Heart left ventricle (tissue), 16 donors: ENCODE measurements at regions of chr9 and their contacts with region 1.

Region 1: GRCh38 chr9:132669698-132670456 is at the start of gene DDX31:
- DNase-seq: peak; percentile 88 to 93 (median 90)
- ATAC-seq: peak; percentile 97 to 99 (median 98)
- H3K4me3 ChIP-seq: peak within 1 kb of the TSS; percentile 61 to 98 (median 88)
- H3K27ac ChIP-seq: peak within 1 kb of the TSS; percentile 80 to 100 (median 97)
- H3K4me1 ChIP-seq: peaks cover 0 to 44% (median 27%) of the 10 kb centered on the region in 12 donors
- H3K27me3 ChIP-seq: no peaks in the 10 kb centered on the region
- CTCF ChIP-seq: no peak
- POLR2A ChIP-seq: peak in 1 of 2 donors; percentile 34
- total RNA-seq, gene DDX31: 4.4 to 7.0 (median 5.1) TPM

Region 2: DNA sequence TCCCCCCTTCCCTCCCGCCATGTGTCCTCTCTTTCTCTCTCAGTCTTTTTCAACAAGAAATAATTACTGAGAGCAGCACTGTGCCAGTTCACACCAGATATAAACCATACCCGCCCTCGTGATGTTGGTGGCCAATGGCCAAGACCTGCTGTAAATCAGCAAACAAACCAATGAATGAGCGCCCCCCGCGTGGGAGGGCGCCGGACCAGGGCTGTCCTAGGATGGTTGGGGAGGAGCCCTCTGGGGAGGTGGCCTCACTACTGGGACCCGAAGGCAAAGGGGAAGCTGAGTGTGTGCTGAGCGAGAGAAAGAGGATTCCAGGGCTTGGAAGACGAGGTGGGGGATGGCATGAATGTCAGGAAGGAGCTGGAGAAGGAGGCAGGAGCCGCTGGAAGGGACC is 138.7 kb before region 1 on chr9:
- intact Hi-C with region 1: no loop called
- DNase-seq: no peak
- ATAC-seq: peak in 1 of 4 donors; percentile 18
- H3K4me3 ChIP-seq: no peak overlapping the region
- H3K27ac ChIP-seq: peak overlapping the region in 1 of 12 donors; percentile 43
- H3K4me1 ChIP-seq: no peaks in the 10 kb centered on the region
- H3K27me3 ChIP-seq: no peaks in the 10 kb centered on the region
- CTCF ChIP-seq: no peak
- POLR2A ChIP-seq: no peak

Region 3: GRCh38 chr9:132656299-132656698 is 13.6 kb before region 1 on chr9:
- intact Hi-C with region 1: no loop called
- DNase-seq: no peak
- ATAC-seq: no peak
- H3K4me3 ChIP-seq: no peak overlapping the region
- H3K27ac ChIP-seq: no peak overlapping the region
- H3K4me1 ChIP-seq: no peaks in the 10 kb centered on the region
- H3K27me3 ChIP-seq: no peaks in the 10 kb centered on the region
- CTCF ChIP-seq: no peak
- POLR2A ChIP-seq: no peak

Region 4: DNA sequence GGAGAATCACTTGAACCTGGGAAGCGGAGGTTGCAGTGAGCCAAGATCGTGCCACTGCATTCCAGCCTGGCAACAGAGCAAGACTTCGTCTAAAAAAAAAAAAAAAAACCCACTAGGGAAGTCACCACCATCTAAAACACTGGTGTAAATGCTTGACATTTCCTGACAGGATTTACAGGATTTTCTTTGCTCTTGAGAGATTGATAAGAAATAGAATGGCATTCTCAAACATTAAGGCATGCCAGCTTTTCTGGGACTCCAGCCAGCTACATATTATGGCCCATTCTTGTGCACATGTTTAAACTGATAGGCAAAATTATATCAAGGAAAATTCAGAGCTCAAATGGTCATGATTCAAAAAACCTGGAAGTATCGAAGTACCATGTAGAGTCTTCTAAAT is 29.1 kb after region 1 on chr9:
- intact Hi-C with region 1: no loop called
- DNase-seq: no peak
- ATAC-seq: no peak
- H3K4me3 ChIP-seq: no peak overlapping the region
- H3K27ac ChIP-seq: no peak overlapping the region
- H3K4me1 ChIP-seq: no peaks in the 10 kb centered on the region
- H3K27me3 ChIP-seq: no peaks in the 10 kb centered on the region
- CTCF ChIP-seq: no peak
- POLR2A ChIP-seq: no peak

Region 5: DNA sequence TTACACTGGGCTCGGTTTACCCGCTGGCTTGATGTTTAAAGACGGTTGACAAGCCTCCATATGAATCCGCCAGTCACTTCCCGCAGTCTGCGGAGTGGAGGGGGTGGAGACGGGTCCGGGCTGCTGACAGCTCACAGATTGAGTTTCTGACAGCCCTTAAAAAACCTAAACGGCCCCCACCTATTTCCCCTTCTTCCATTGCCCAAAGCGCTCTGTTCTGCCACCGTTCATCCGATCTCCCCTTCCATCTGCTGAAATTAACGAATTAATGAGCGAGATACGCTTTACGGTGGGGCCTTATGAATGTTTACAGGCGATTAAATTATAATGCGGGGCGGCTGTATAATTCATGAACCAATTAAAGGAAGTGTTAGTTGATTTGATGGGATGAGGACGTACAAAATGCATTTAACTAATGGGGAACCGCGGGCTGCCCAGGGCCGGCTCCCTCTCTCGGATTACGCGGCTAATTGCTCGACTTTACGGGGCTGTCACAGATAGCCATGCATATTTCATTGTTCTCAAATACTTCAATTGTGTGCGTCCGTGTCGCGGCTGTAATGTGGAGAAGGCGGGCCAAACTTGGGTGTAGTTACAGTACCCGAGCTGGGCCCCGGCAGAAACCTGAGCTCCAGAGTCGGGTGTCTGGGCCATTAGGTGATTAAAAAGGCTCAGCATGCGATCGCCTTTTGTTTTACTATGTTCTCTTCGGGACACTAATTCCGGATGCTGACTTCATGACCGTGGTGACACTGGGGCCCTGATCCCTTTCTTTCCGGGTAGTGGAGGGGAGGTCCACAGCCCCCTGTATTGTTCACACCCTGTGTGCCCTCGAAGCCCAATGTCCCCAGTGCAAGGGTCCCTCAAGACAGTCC is 75.2 kb after region 1 on chr9:
- intact Hi-C with region 1: no loop called
- DNase-seq: no peak
- ATAC-seq: peak in 1 of 4 donors; percentile 34
- H3K4me3 ChIP-seq: peak overlapping the region in 9 of 12 donors; percentile 17 to 47 (median 33)
- H3K27ac ChIP-seq: no peak overlapping the region
- H3K4me1 ChIP-seq: peaks cover 0 to 10% (median 0%) of the 10 kb centered on the region in 12 donors
- H3K27me3 ChIP-seq: peaks cover 9 to 46% (median 19%) of the 10 kb centered on the region in 9 donors
- CTCF ChIP-seq: no peak
- POLR2A ChIP-seq: no peak

Region 6: GRCh38 chr9:132877824-132878694 is 208.2 kb after region 1 on chr9 and contains the start of gene AK8:
- intact Hi-C with region 1: loop called in 1 of 10 experiments (anchors 5 kb)
- DNase-seq: peak; percentile 67 to 88 (median 77)
- ATAC-seq: peak; percentile 71 to 93 (median 86)
- H3K4me3 ChIP-seq: peak within 1 kb of the TSS; percentile 75 to 100 (median 95)
- H3K27ac ChIP-seq: peak within 1 kb of the TSS; percentile 15 to 86 (median 80)
- H3K4me1 ChIP-seq: peaks cover 0 to 23% (median 5%) of the 10 kb centered on the region in 12 donors
- H3K27me3 ChIP-seq: no peaks in the 10 kb centered on the region
- CTCF ChIP-seq: no peak
- POLR2A ChIP-seq: no peak
- total RNA-seq, gene AK8: 0.61 to 1.4 TPM in 2 of 9 donors, not detected in the others